ENCODE measurements at regions of chr10 and their contacts with region 1.

Region 1: GRCh38 chr10:75401569-75402485 is at the start of gene ZNF503:
- DNase-seq: peak; percentile 94
- ATAC-seq: peak; percentile 67
- H3K4me3 ChIP-seq: peak within 1 kb of the TSS; percentile 93 to 96
- H3K27ac ChIP-seq: peak within 1 kb of the TSS; percentile 97
- H3K4me1 ChIP-seq: peaks cover 27 to 64% of the 10 kb centered on the region in 2 experiments; a peak in 3 of 4 replicates
- H3K27me3 ChIP-seq: no peaks in the 10 kb centered on the region
- CTCF ChIP-seq: peak in 1 of 3 experiments; percentile 14; a peak in 1 of 6 replicates
- POLR2A ChIP-seq: peak; percentile 77
- RAD21 ChIP-seq: no peak
- total RNA-seq, gene ZNF503: 30.4 TPM

Region 2: GRCh38 chr10:75137533-75138438 is 264.0 kb before region 1 on chr10:
- CTCF ChIA-PET with region 1: no interaction called
- POLR2A ChIA-PET with region 1: no interaction called
- RAD21 ChIA-PET with region 1: no interaction called
- intact Hi-C with region 1: no loop called
- DNase-seq: peak; percentile 38
- ATAC-seq: peak; percentile 89
- H3K4me3 ChIP-seq: peak overlapping the region in 1 of 2 experiments; percentile 9; a peak in 1 of 4 replicates
- H3K27ac ChIP-seq: peak overlapping the region; percentile 27; the same call in 1 of the 2 replicates
- H3K4me1 ChIP-seq: peaks cover 39 to 52% of the 10 kb centered on the region in 2 experiments
- H3K27me3 ChIP-seq: no peaks in the 10 kb centered on the region
- CTCF ChIP-seq: no peak
- POLR2A ChIP-seq: no peak
- RAD21 ChIP-seq: no peak

Region 3: DNA sequence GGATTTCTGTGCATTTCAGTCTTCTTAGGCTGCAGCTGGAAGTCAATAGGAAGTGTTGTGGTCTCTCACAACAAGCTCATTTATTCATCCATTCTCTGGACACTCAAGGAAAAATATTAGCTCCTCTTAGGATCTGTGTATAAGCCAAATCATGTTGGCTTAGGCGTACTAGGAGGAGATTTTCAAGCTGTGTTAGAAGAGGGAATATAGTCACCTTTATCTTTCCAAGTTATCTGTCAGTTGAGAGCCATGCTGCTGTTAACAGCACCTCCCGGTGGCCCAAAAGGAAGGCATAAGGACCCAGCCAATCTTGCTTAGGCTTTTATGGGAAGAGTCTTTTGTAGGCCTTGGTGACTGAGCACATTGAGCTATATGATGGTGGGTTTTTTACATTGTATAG is 249.6 kb after region 1 on chr10:
- CTCF ChIA-PET with region 1: no interaction called
- POLR2A ChIA-PET with region 1: interaction called, 3 read pairs
- RAD21 ChIA-PET with region 1: no interaction called
- intact Hi-C with region 1: loop called (anchors 1 kb)
- DNase-seq: peak; percentile 15
- ATAC-seq: peak; percentile 77
- H3K4me3 ChIP-seq: no peak overlapping the region
- H3K27ac ChIP-seq: no peak overlapping the region
- H3K4me1 ChIP-seq: peaks cover 0 to 10% of the 10 kb centered on the region in 2 experiments; a peak in 1 of 4 replicates
- H3K27me3 ChIP-seq: peaks cover 19% of the 10 kb centered on the region
- CTCF ChIP-seq: peak; percentile 40 to 54 (median 46); a peak in 5 of 6 replicates
- POLR2A ChIP-seq: no peak
- RAD21 ChIP-seq: peak; percentile 66

Region 4: DNA sequence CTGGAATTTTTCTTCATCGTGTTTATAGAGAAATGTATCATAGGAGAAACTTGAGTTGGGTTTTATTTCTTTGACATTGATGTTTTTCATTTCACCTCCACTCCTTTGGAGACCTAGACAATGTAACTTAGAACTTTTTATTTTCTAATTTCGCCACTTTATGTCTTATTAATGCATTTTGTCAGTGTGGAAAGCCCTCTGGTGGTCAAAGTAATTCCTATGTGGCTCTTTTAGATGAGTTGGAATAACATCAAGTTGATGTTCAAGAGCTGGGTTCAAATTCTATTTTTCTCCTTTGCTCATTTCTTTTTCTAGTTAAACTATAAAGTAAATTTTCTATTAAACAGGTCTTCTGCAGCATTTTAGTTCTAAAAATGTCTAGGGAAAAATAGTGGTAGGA is 508.2 kb after region 1 on chr10:
- CTCF ChIA-PET with region 1: interaction called, 3 read pairs
- POLR2A ChIA-PET with region 1: no interaction called
- RAD21 ChIA-PET with region 1: interaction called in 1 of 2 experiments, 4 read pairs
- intact Hi-C with region 1: loop called (anchors 1 kb)
- DNase-seq: no peak
- ATAC-seq: no peak
- H3K4me3 ChIP-seq: no peak overlapping the region
- H3K27ac ChIP-seq: no peak overlapping the region
- H3K4me1 ChIP-seq: no peaks in the 10 kb centered on the region
- H3K27me3 ChIP-seq: peaks cover 26% of the 10 kb centered on the region; the same call in 1 of the 2 replicates
- CTCF ChIP-seq: peak; percentile 38 to 59 (median 43); a peak in 4 of 6 replicates
- POLR2A ChIP-seq: no peak
- RAD21 ChIP-seq: peak; percentile 51; the same call in 1 of the 2 replicates

Region 5: GRCh38 chr10:76106611-76107010 is 704.8 kb after region 1 on chr10:
- CTCF ChIA-PET with region 1: no interaction called
- POLR2A ChIA-PET with region 1: no interaction called
- RAD21 ChIA-PET with region 1: no interaction called
- intact Hi-C with region 1: loop called (anchors 5 kb)
- DNase-seq: no peak
- ATAC-seq: no peak
- H3K4me3 ChIP-seq: no peak overlapping the region
- H3K27ac ChIP-seq: no peak overlapping the region
- H3K4me1 ChIP-seq: peaks cover 14 to 26% of the 10 kb centered on the region in 2 experiments
- H3K27me3 ChIP-seq: no peaks in the 10 kb centered on the region
- CTCF ChIP-seq: no peak
- POLR2A ChIP-seq: no peak
- RAD21 ChIP-seq: no peak

Region 6: GRCh38 chr10:76303682-76304316 is 902.0 kb after region 1 on chr10:
- CTCF ChIA-PET with region 1: interaction called, 15 read pairs
- POLR2A ChIA-PET with region 1: interaction called, 3 read pairs
- RAD21 ChIA-PET with region 1: no interaction called
- intact Hi-C with region 1: loop called (anchors 2 kb)
- DNase-seq: peak; percentile 28
- ATAC-seq: peak; percentile 92
- H3K4me3 ChIP-seq: no peak overlapping the region
- H3K27ac ChIP-seq: no peak overlapping the region
- H3K4me1 ChIP-seq: no peaks in the 10 kb centered on the region
- H3K27me3 ChIP-seq: peaks cover 14% of the 10 kb centered on the region; the same call in 1 of the 2 replicates
- CTCF ChIP-seq: peak; percentile 29 to 55 (median 45); a peak in 4 of 6 replicates
- POLR2A ChIP-seq: no peak
- RAD21 ChIP-seq: peak; percentile 69

Region 7: GRCh38 chr10:76553263-76554032 is 1151.6 kb after region 1 on chr10:
- CTCF ChIA-PET with region 1: no interaction called
- POLR2A ChIA-PET with region 1: no interaction called
- RAD21 ChIA-PET with region 1: no interaction called
- intact Hi-C with region 1: no loop called
- DNase-seq: no peak
- ATAC-seq: no peak
- H3K4me3 ChIP-seq: no peak overlapping the region
- H3K27ac ChIP-seq: no peak overlapping the region
- H3K4me1 ChIP-seq: no peaks in the 10 kb centered on the region
- H3K27me3 ChIP-seq: peaks cover 13% of the 10 kb centered on the region; the same call in 1 of the 2 replicates
- CTCF ChIP-seq: no peak
- POLR2A ChIP-seq: no peak
- RAD21 ChIP-seq: no peak

Measured in HCT116 (cell line).